CD4-positive, alpha-beta T cell (primary cell): ENCODE measurements at regions of chr9 and their contacts with region 1.

Region 1: DNA sequence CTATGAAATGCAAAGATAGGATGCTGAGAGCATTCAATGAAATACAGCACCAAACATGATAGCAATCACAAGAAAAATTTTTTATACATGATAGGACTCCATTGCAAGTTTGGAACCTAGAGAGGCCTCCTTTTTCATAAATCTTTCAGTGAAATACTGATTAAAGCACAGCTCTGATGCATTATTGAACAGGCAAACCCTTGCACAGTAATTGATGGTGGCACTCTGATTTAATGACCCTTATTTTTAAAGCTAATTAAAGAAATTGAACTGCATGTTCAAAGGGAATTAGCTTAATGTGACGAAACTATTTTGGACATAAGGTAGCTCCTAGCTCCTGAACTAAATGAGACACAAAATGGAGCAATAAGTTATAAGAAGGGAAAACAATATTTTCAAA is 44.6 kb downstream of the MPDZ start:
- DNase-seq: no peak
- ATAC-seq: no peak
- H3K4me3 ChIP-seq: no peak overlapping the region
- H3K4me3 Mint-ChIP-seq: no peak overlapping the region
- H3K27ac ChIP-seq: no peak overlapping the region
- H3K27ac Mint-ChIP-seq: no peak overlapping the region
- H3K4me1 ChIP-seq: no peaks in the 10 kb centered on the region
- H3K4me1 Mint-ChIP-seq: no peaks in the 10 kb centered on the region
- H3K27me3 ChIP-seq: no peaks in the 10 kb centered on the region
- H3K27me3 Mint-ChIP-seq: no peaks in the 10 kb centered on the region
- CTCF ChIP-seq: no peak

Region 2: DNA sequence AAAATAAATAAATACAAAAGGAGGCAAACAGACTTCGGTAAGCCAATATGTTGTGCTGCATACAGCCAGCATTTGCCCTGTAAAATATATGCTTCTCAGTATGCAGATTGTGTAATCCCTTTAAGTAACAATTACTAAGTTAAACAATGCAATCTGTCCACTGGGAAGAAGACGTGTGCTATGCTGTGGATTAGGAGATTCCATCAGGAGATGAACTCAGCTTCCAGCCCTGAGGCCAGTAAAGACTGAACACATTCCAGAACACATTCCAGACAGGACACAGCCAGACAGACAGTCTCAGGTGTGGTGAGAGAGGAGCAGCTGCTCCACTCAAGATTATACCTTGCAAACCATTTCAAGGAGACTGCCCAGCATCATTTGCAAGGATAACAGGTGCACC is 53.3 kb before region 1 on chr9:
- CTCF ChIA-PET with region 1: no interaction called
- POLR2A ChIA-PET with region 1: no interaction called
- intact Hi-C with region 1: loop called in 1 of 2 experiments (anchors 5 kb)
- DNase-seq: no peak
- ATAC-seq: no peak
- H3K4me3 ChIP-seq: no peak overlapping the region
- H3K4me3 Mint-ChIP-seq: no peak overlapping the region
- H3K27ac ChIP-seq: no peak overlapping the region
- H3K27ac Mint-ChIP-seq: no peak overlapping the region
- H3K4me1 ChIP-seq: no peaks in the 10 kb centered on the region
- H3K4me1 Mint-ChIP-seq: no peaks in the 10 kb centered on the region
- H3K27me3 ChIP-seq: no peaks in the 10 kb centered on the region
- H3K27me3 Mint-ChIP-seq: no peaks in the 10 kb centered on the region
- CTCF ChIP-seq: no peak

Region 3: DNA sequence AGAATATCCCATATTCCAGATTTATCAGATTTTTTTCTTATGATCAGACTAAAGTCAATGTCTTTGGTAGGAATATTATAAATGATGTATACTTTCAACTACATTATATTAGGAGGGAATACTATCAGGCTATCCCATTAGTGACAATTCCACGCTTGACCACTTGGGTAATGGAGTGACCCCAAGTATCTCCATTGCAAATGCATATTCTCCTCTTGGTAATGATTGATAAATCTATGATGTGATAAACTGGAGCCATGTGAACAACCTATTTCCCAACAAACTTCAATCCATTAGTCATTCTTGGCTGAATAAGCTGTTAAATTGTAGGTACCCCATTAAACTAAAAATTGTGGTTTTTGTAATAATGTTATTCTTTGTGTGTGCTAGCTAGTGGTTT is 56.8 kb after region 1 on chr9:
- CTCF ChIA-PET with region 1: no interaction called
- POLR2A ChIA-PET with region 1: no interaction called
- intact Hi-C with region 1: loop called in 1 of 2 experiments (anchors 10 kb)
- DNase-seq: no peak
- ATAC-seq: no peak
- H3K4me3 ChIP-seq: no peak overlapping the region
- H3K4me3 Mint-ChIP-seq: no peak overlapping the region
- H3K27ac ChIP-seq: no peak overlapping the region
- H3K27ac Mint-ChIP-seq: no peak overlapping the region
- H3K4me1 ChIP-seq: no peaks in the 10 kb centered on the region
- H3K4me1 Mint-ChIP-seq: no peaks in the 10 kb centered on the region
- H3K27me3 ChIP-seq: no peaks in the 10 kb centered on the region
- H3K27me3 Mint-ChIP-seq: no peaks in the 10 kb centered on the region
- CTCF ChIP-seq: no peak